ENCODE measurements at regions of chr1 and their contacts with region 1.

Region 1: GRCh38 chr1:153922972-153923925 is at the start of gene GATAD2B:
- DNase-seq: peak; percentile 99 to 100
- H3K4me3 ChIP-seq: peak within 1 kb of the TSS; percentile 65
- H3K4me3 Mint-ChIP-seq: peak within 1 kb of the TSS; percentile 71
- H3K27ac Mint-ChIP-seq: peak within 1 kb of the TSS; percentile 86
- H3K4me1 ChIP-seq: peaks cover 16% of the 10 kb centered on the region
- H3K4me1 Mint-ChIP-seq: peaks cover 15% of the 10 kb centered on the region
- H3K27me3 ChIP-seq: no peaks in the 10 kb centered on the region
- H3K27me3 Mint-ChIP-seq: no peaks in the 10 kb centered on the region
- CTCF ChIP-seq: no peak
- total RNA-seq, gene GATAD2B: 38.0 and 42.6 TPM in 2 replicates

Region 2: DNA sequence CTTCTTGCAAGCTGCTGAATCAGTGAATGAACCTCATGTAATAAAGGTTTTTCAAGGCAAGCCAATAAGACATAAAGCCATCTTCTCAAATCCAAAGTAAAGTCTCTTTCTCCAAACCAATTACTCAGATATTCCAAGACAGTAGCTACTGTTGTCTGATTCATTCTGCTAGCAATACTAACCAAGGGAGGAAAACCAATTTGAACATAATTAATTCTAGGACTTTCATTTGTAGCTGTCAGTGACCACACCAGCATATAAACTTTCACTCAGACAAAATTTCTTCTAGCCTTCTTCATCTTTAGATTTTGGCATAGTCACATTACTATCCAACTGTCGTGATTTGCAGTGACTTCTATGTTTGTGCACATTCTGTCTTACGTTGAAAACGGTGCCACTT is 205.9 kb before region 1 on chr1:
- CTCF ChIA-PET with region 1: no interaction called
- POLR2A ChIA-PET with region 1: no interaction called
- intact Hi-C with region 1: no loop called
- DNase-seq: no peak
- H3K4me3 ChIP-seq: no peak overlapping the region
- H3K4me3 Mint-ChIP-seq: no peak overlapping the region
- H3K27ac Mint-ChIP-seq: no peak overlapping the region
- H3K4me1 ChIP-seq: no peaks in the 10 kb centered on the region
- H3K4me1 Mint-ChIP-seq: no peaks in the 10 kb centered on the region
- H3K27me3 ChIP-seq: no peaks in the 10 kb centered on the region
- H3K27me3 Mint-ChIP-seq: no peaks in the 10 kb centered on the region
- CTCF ChIP-seq: no peak

Region 3: DNA sequence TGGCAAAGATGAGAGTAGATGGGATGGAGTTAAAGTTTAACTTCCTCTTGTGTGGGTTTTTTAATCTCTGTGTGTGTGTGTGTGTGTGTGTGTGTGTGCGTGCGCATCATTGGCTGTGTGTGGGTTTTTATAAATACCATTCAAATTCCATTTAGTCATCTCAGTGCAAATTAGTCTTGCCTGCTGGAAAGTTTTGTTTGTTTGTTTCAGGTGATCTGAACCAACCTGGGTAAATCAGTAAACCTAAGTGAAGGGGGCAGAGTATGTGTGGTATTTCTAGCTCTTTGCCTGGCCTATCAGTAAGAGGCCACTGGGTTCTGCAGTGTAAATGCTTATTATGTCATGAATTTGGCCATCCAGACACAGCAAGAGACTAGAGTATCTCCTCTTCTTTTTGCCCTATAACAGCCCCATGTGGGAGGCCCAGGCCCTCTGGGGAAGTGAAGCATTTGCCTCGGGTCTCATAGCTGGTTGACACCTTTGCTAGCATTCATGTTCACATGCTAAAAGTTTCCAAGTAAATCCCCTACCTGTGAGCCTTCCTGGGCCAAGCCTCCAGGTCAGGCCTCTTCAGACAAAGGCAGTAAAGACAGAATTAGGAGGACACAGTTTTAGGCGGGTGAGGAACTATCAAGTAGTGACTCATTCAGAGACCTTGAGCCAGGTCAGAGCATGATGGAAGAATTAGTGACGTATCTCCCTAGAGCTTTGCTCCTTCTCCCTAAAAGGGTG is 180.7 kb before region 1 on chr1:
- CTCF ChIA-PET with region 1: no interaction called
- POLR2A ChIA-PET with region 1: no interaction called
- intact Hi-C with region 1: no loop called
- DNase-seq: peak; percentile 77 to 78
- H3K4me3 ChIP-seq: no peak overlapping the region
- H3K4me3 Mint-ChIP-seq: peak overlapping the region; percentile 44
- H3K27ac Mint-ChIP-seq: peak overlapping the region; percentile 89
- H3K4me1 ChIP-seq: peaks cover 33% of the 10 kb centered on the region
- H3K4me1 Mint-ChIP-seq: peaks cover 33% of the 10 kb centered on the region
- H3K27me3 ChIP-seq: no peaks in the 10 kb centered on the region
- H3K27me3 Mint-ChIP-seq: no peaks in the 10 kb centered on the region
- CTCF ChIP-seq: no peak

Region 4: DNA sequence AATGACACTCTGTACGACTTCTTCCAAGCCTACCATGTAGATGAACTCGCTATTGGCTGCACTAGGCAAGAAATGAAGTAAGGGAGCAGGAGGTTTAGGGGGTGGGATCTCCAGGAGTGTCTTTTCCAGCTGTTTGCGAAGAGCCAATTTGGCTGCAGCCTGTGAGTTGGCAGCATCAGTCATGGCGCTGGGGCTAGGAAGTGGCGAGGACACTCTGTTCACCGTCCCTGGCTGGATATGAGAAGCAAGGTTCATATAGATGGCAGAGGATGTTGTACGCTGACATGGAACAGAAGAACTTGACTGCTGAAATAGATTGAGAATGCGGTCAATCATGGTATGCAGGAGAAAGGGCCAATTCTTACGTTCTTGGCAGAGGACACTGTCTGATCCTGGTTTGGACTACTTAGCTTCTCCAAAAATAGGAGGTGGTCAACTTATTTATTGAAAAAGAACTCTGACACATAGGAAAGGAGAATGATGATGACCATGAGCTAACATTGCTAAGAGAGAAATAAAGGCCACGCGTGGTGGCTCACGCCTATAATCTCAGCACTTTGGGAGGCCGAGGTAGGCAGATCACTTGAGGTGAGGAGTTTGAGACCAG is 106.9 kb before region 1 on chr1:
- CTCF ChIA-PET with region 1: interaction called, 3 read pairs
- POLR2A ChIA-PET with region 1: interaction called, 4 read pairs
- intact Hi-C with region 1: loop called (anchors 2 kb)
- DNase-seq: no peak
- H3K4me3 ChIP-seq: no peak overlapping the region
- H3K4me3 Mint-ChIP-seq: no peak overlapping the region
- H3K27ac Mint-ChIP-seq: no peak overlapping the region
- H3K4me1 ChIP-seq: no peaks in the 10 kb centered on the region
- H3K4me1 Mint-ChIP-seq: no peaks in the 10 kb centered on the region
- H3K27me3 ChIP-seq: no peaks in the 10 kb centered on the region
- H3K27me3 Mint-ChIP-seq: no peaks in the 10 kb centered on the region
- CTCF ChIP-seq: no peak

Region 5: GRCh38 chr1:153946622-153947241 is 23.5 kb after region 1 on chr1 and contains the start of gene DENND4B:
- CTCF ChIA-PET with region 1: interaction called, 24 read pairs
- POLR2A ChIA-PET with region 1: interaction called, 6 read pairs
- intact Hi-C with region 1: loop called (anchors 2 kb)
- DNase-seq: peak; percentile 85 to 92
- H3K4me3 ChIP-seq: peak within 1 kb of the TSS; percentile 92
- H3K4me3 Mint-ChIP-seq: peak within 1 kb of the TSS; percentile 82
- H3K27ac Mint-ChIP-seq: peak within 1 kb of the TSS; percentile 57
- H3K4me1 ChIP-seq: peaks cover 8% of the 10 kb centered on the region
- H3K4me1 Mint-ChIP-seq: peaks cover 7% of the 10 kb centered on the region
- H3K27me3 ChIP-seq: no peaks in the 10 kb centered on the region
- H3K27me3 Mint-ChIP-seq: no peaks in the 10 kb centered on the region
- CTCF ChIP-seq: peak; percentile 95 to 97
- total RNA-seq, gene DENND4B: 78.2 and 79.0 TPM in 2 replicates

Measured in Caco-2 (cell line).